ENCODE measurements at regions of chr7 and their contacts with region 1.

Region 1: DNA sequence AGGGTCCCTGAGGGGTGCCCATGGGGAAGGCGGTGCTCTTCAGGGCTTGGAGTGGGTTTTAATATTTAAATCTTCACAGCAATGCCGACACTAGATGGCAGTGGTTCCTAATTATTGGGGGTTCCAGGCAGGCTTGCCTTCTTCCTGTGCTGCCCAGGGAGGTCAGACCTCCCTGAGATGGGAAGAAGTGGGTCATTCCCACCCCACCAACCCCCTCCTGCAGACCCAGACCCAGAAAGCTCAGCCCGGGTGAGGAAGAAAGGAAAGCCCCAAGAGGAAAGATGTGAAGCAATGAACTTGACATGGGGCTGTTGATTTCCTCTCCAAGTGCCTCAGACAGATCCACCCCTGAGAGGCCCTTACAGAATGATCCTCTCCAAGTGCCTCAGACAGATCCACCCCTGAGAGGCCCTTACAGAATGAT is 85.1 kb upstream of the LANCL2 start:
- DNase-seq: peak; percentile 73
- H3K4me3 Mint-ChIP-seq: no peak overlapping the region
- H3K27ac Mint-ChIP-seq: no peak overlapping the region
- H3K4me1 Mint-ChIP-seq: no peaks in the 10 kb centered on the region
- H3K27me3 Mint-ChIP-seq: peaks cover 9% of the 10 kb centered on the region

Region 2: DNA sequence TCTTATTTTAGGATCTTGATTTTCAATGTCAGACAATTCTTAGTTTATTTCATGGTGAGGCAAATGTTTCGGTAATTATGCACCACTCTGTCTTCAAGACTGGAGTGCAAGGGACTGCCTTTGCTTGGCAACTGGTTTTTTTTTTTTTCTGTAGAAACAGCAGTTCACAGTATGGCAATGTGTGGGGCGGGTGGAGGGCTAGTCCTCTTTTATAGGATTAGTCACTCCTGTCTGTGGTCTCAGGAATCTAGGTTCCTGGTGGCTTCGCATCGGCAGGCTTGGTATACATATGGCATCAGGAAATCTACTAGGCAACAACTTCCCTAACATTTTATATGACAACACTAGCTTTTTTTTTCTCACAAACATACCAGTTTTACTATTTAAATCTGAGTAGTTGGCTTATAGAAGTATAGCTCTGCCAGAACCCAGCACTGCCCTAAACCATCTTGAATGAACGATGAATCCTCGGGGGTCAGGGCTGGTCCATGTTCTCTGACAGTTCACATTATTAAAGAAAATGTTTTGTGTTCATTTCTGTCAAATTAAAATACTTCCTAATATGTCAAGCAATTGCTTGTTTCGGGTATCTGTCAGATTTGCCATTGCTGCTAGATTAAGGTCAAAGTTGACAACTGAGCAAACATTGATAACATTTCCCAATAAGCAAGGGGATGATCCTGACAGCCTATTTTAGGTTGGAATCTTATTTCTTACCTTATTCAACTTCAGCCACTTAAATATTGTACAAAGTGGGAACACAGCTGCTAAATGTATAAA is 1027.6 kb before region 1 on chr7:
- CTCF ChIA-PET with region 1: no interaction called
- DNase-seq: no peak
- H3K4me3 Mint-ChIP-seq: no peak overlapping the region
- H3K27ac Mint-ChIP-seq: no peak overlapping the region
- H3K4me1 Mint-ChIP-seq: no peaks in the 10 kb centered on the region
- H3K27me3 Mint-ChIP-seq: no peaks in the 10 kb centered on the region

Region 3: GRCh38 chr7:55299273-55299967 is 19.4 kb after region 1 on chr7:
- CTCF ChIA-PET with region 1: no interaction called
- DNase-seq: no peak
- H3K4me3 Mint-ChIP-seq: no peak overlapping the region
- H3K27ac Mint-ChIP-seq: no peak overlapping the region
- H3K4me1 Mint-ChIP-seq: no peaks in the 10 kb centered on the region
- H3K27me3 Mint-ChIP-seq: peaks cover 19% of the 10 kb centered on the region

Region 4: DNA sequence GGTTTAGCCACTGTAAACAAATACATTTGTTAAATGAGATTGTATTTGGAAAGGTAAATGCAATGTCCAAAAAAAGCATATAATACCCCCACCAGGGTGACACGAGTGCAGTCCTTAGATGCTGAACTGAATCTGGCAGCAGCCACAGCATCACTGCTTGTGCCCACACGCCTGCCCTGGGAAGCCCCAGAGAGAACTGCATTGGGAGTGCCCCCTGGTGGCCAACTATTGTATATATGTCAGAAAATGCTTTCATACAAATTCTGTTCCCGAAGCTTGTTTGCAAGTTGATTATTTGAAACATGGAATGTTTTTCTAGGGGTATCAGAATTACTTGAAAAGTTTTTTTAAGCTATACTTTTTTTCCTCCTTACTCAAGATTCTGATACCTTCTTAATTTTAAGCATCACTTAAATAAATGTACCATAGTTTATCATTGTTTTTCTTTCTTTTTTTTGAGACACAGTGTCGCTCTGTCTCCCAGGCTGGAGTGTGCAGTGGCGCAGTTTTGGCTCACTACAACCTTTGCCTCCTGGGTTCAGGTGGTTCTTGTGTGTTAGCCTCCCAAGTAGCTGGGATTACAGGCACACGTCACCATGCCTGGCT is 135.2 kb after region 1 on chr7:
- CTCF ChIA-PET with region 1: interaction called, 73 read pairs
- DNase-seq: peak; percentile 85
- H3K4me3 Mint-ChIP-seq: no peak overlapping the region
- H3K27ac Mint-ChIP-seq: no peak overlapping the region
- H3K4me1 Mint-ChIP-seq: no peaks in the 10 kb centered on the region
- H3K27me3 Mint-ChIP-seq: no peaks in the 10 kb centered on the region

Measured in activated naive CD4-positive, alpha-beta T cell treated with anti-CD3 and anti-CD28 coated beads, Interleukin-2, amount 10 ng/mL, durations not matched to agents 7 days and 5 days (primary cell).